ENCODE measurements at regions of chr14 and their contacts with region 1.

Region 1: GRCh38 chr14:58395812-58396788 is at the start of gene TOMM20L:
- DNase-seq: peak; percentile 57 to 77 (median 69)
- H3K4me3 ChIP-seq: peak within 1 kb of the TSS; percentile 59
- H3K4me3 Mint-ChIP-seq: peak within 1 kb of the TSS; percentile 83 to 91 (median 87)
- H3K27ac ChIP-seq: no peak within 1 kb of the TSS
- H3K27ac Mint-ChIP-seq: peak within 1 kb of the TSS; percentile 89 to 98 (median 93)
- H3K4me1 ChIP-seq: peaks cover 6% of the 10 kb centered on the region
- H3K4me1 Mint-ChIP-seq: peaks cover 11 to 16% (median 12%) of the 10 kb centered on the region in 3 donors
- H3K27me3 ChIP-seq: no peaks in the 10 kb centered on the region
- H3K27me3 Mint-ChIP-seq: peaks cover 0 to 2% of the 10 kb centered on the region in 2 donors
- total RNA-seq, gene TOMM20L: 0.37 TPM in 1 of 2 experiments, not detected in the other

Region 2: DNA sequence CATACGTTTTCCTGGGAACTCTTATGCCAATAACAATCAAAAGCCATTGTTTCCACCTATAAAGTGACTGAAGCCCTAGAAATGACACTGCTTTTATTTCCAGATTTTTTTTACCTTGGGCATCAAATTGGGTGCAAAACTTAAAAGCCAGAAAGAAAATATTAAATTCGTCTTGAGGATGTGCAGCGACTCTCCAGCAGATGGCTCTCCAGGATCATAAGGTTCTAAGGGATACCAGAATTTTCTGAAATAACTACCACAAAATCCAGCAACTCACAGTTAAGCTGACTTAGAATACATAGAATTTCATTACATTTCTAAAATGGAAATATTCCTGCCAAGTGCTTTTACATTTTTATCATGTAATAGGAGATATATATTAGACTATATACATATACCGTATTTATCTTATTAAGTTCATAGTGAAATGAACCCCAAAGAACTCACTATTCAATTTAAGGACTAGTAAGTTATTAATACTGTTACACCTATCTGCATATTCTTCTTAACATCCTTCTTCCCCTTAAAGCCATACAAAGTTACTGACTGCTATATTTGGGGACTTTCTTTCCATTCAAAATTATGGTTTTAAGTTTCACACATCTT is 288.1 kb before region 1 on chr14:
- CTCF ChIA-PET with region 1: interaction called, 17 read pairs
- POLR2A ChIA-PET with region 1: no interaction called
- DNase-seq: peak in 4 of 5 donors; percentile 15 to 49 (median 28)
- H3K4me3 ChIP-seq: no peak overlapping the region
- H3K4me3 Mint-ChIP-seq: no peak overlapping the region
- H3K27ac ChIP-seq: no peak overlapping the region
- H3K27ac Mint-ChIP-seq: no peak overlapping the region
- H3K4me1 ChIP-seq: no peaks in the 10 kb centered on the region
- H3K4me1 Mint-ChIP-seq: no peaks in the 10 kb centered on the region
- H3K27me3 ChIP-seq: no peaks in the 10 kb centered on the region
- H3K27me3 Mint-ChIP-seq: peaks cover 0 to 21% of the 10 kb centered on the region in 2 donors

Region 3: GRCh38 chr14:58265401-58265800 is 130.7 kb before region 1 on chr14:
- CTCF ChIA-PET with region 1: no interaction called
- POLR2A ChIA-PET with region 1: no interaction called
- DNase-seq: no peak
- H3K4me3 ChIP-seq: no peak overlapping the region
- H3K4me3 Mint-ChIP-seq: no peak overlapping the region
- H3K27ac ChIP-seq: no peak overlapping the region
- H3K27ac Mint-ChIP-seq: peak overlapping the region in 4 of 8 donors; percentile 29 to 73 (median 50)
- H3K4me1 ChIP-seq: no peaks in the 10 kb centered on the region
- H3K4me1 Mint-ChIP-seq: peaks cover 4 to 31% (median 28%) of the 10 kb centered on the region in 3 donors
- H3K27me3 ChIP-seq: no peaks in the 10 kb centered on the region
- H3K27me3 Mint-ChIP-seq: no peaks in the 10 kb centered on the region

Region 4: GRCh38 chr14:58427281-58428117 is 31.4 kb after region 1 on chr14 and contains the starts of genes KIAA0586 and TIMM9:
- CTCF ChIA-PET with region 1: interaction called, 13 read pairs
- POLR2A ChIA-PET with region 1: interaction called, 23 read pairs
- DNase-seq: peak; percentile 91 to 99 (median 96)
- H3K4me3 ChIP-seq: peak within 1 kb of the TSS; percentile 100
- H3K4me3 Mint-ChIP-seq: peak within 1 kb of the TSS; percentile 87 to 97 (median 93)
- H3K27ac ChIP-seq: peak within 1 kb of the TSS; percentile 100
- H3K27ac Mint-ChIP-seq: peak within 1 kb of the TSS; percentile 92 to 99 (median 96)
- H3K4me1 ChIP-seq: peaks cover 16% of the 10 kb centered on the region
- H3K4me1 Mint-ChIP-seq: peaks cover 44 to 65% (median 54%) of the 10 kb centered on the region in 3 donors
- H3K27me3 ChIP-seq: no peaks in the 10 kb centered on the region
- H3K27me3 Mint-ChIP-seq: peaks cover 0 to 8% of the 10 kb centered on the region in 2 donors
- total RNA-seq, gene KIAA0586: 19.3 to 20.3 TPM
- total RNA-seq, gene TIMM9: 84.3 to 96.7 TPM

Measured in CD8-positive, alpha-beta memory T cell (primary cell).